ENCODE measurements at regions of chr4 and their contacts with region 1.

Region 1: GRCh38 chr4:109815151-109816081 is at the start of gene GAR1:
- DNase-seq: peak; percentile 97
- H3K4me3 ChIP-seq: peak within 1 kb of the TSS; percentile 99
- H3K27ac ChIP-seq: peak within 1 kb of the TSS; percentile 90
- H3K4me1 ChIP-seq: peaks cover 16% of the 10 kb centered on the region
- H3K27me3 ChIP-seq: no peaks in the 10 kb centered on the region
- total RNA-seq, gene GAR1: 5.9 and 8.5 TPM in 2 replicates

Region 2: GRCh38 chr4:108834835-108835384 is 980.5 kb before region 1 on chr4:
- in situ Hi-C with region 1: loop called (anchors 25 kb)
- DNase-seq: peak; percentile 85
- H3K4me3 ChIP-seq: 0 out of 2 replicates have a peak overlapping the region, but pooled peaks have one; percentile 6
- H3K27ac ChIP-seq: peak overlapping the region; percentile 36
- H3K4me1 ChIP-seq: peaks cover 29% of the 10 kb centered on the region
- H3K27me3 ChIP-seq: no peaks in the 10 kb centered on the region

Region 3: GRCh38 chr4:109424093-109424841 is 391.1 kb before region 1 on chr4:
- in situ Hi-C with region 1: loop called (anchors 10 kb)
- DNase-seq: no peak
- H3K4me3 ChIP-seq: no peak overlapping the region
- H3K27ac ChIP-seq: no peak overlapping the region
- H3K4me1 ChIP-seq: peaks cover 4% of the 10 kb centered on the region
- H3K27me3 ChIP-seq: no peaks in the 10 kb centered on the region

Region 4: DNA sequence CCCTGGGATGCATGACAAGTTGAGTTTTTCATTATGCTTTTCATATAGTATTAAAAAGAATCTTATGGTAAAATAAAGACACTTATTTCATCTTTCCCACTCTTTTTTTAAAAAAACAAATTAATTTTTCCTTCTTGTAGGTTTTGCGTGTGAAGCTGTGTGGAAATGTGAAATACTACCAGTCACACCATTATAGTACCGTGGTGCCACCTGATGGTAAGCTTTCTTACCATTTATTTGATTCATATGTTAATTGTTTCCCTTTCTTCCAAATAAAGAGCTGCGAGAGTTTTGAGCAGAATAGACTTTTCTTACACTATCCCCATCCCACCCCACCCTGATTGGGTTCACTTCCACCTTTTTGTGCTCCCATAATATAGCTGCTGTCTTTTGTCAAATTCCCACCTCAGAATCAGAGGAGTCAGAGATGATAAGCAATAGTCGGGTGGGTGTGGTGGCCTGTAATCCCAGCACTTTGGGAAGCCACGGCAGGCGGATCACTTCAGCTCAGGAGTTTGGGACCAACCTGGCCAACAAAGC is 156.5 kb before region 1 on chr4:
- in situ Hi-C with region 1: no loop called
- DNase-seq: no peak
- H3K4me3 ChIP-seq: no peak overlapping the region
- H3K27ac ChIP-seq: no peak overlapping the region
- H3K4me1 ChIP-seq: no peaks in the 10 kb centered on the region
- H3K27me3 ChIP-seq: no peaks in the 10 kb centered on the region

Region 5: GRCh38 chr4:110034026-110034393 is 218.6 kb after region 1 on chr4:
- in situ Hi-C with region 1: no loop called
- DNase-seq: no peak
- H3K4me3 ChIP-seq: no peak overlapping the region
- H3K27ac ChIP-seq: no peak overlapping the region
- H3K4me1 ChIP-seq: no peaks in the 10 kb centered on the region
- H3K27me3 ChIP-seq: no peaks in the 10 kb centered on the region

Measured in GM23248 (cell line).